ENCODE measurements at regions of chr16 and their contacts with region 1.

Region 1: GRCh38 chr16:21158208-21159110 is at the start of gene LDAF1:
- DNase-seq: peak; percentile 93
- ATAC-seq: peak; percentile 92
- total RNA-seq, gene LDAF1: 148 TPM

Region 2: GRCh38 chr16:21244518-21245215 is 86.2 kb after region 1 on chr16:
- intact Hi-C with region 1: no loop called
- DNase-seq: no peak
- ATAC-seq: no peak

Region 3: DNA sequence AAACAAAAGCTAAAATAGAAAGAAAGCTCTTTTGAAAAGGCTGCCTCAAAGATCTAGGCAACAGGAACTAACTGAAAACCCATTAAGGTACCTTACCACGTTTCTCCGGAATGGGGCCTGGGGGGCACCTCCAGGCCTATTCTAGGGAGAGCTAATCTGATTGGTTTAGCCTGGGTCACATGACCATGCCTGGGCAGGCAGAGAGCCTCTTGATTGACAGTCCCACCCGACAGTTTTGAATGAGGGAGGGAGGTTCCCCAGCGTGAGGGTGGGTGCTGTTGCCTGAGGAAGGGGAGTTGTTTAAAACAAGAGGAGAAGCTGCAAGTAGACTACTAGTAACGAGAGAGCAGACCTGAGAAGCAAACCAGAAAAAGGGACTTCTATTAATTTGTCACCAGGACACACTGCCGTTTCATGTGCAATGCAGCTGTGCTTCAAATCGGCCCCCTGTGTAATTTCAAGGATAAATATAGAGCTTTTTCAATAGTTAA is 1512.1 kb after region 1 on chr16:
- intact Hi-C with region 1: loop called (anchors 10 kb)
- DNase-seq: no peak
- ATAC-seq: no peak

Measured in Right ventricle myocardium superior (tissue), 1 donor.